ENCODE measurements at regions of chr14 and their contacts with region 1.

Region 1: GRCh38 chr14:87615822-87616679 is 376.9 kb downstream of the GALC start:
- DNase-seq: peak; percentile 77
- H3K4me3 Mint-ChIP-seq: no peak overlapping the region
- H3K27ac Mint-ChIP-seq: no peak overlapping the region
- H3K4me1 Mint-ChIP-seq: peaks cover 13% of the 10 kb centered on the region
- H3K27me3 Mint-ChIP-seq: no peaks in the 10 kb centered on the region
- CTCF ChIP-seq: peak; percentile 77

Region 2: GRCh38 chr14:87066221-87066817 is 549.7 kb before region 1 on chr14:
- CTCF ChIA-PET with region 1: no interaction called
- intact Hi-C with region 1: loop called (anchors 5 kb)
- DNase-seq: no peak
- H3K4me3 Mint-ChIP-seq: no peak overlapping the region
- H3K27ac Mint-ChIP-seq: no peak overlapping the region
- H3K4me1 Mint-ChIP-seq: no peaks in the 10 kb centered on the region
- H3K27me3 Mint-ChIP-seq: no peaks in the 10 kb centered on the region
- CTCF ChIP-seq: peak; percentile 20

Region 3: GRCh38 chr14:87205811-87206210 is 410.2 kb before region 1 on chr14:
- CTCF ChIA-PET with region 1: no interaction called
- intact Hi-C with region 1: loop called (anchors 2 kb)
- DNase-seq: no peak
- H3K4me3 Mint-ChIP-seq: no peak overlapping the region
- H3K27ac Mint-ChIP-seq: no peak overlapping the region
- H3K4me1 Mint-ChIP-seq: no peaks in the 10 kb centered on the region
- H3K27me3 Mint-ChIP-seq: no peaks in the 10 kb centered on the region
- CTCF ChIP-seq: no peak

Region 4: DNA sequence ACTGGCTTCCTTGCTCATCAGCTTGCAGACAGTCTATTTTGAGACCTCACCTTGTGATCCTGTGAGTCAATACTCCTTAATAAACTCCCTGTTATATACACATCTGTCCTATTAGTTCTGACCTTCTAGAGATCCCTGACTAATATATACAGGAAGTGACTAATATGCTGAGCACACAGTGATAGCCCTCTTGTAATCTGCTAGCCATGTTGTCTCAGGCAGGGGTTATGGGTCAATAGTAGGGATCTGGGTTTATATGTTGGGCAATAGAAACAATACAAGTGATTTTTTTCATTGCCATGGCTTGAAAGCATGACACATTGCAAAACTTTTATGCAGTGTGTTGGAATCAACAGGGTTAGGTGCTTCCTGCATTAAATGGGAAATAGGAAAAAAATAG is 185.2 kb before region 1 on chr14:
- CTCF ChIA-PET with region 1: interaction called, 5 read pairs
- intact Hi-C with region 1: loop called (anchors 10 kb)
- DNase-seq: no peak
- H3K4me3 Mint-ChIP-seq: no peak overlapping the region
- H3K27ac Mint-ChIP-seq: no peak overlapping the region
- H3K4me1 Mint-ChIP-seq: peaks cover 17% of the 10 kb centered on the region
- H3K27me3 Mint-ChIP-seq: no peaks in the 10 kb centered on the region
- CTCF ChIP-seq: no peak

Region 5: DNA sequence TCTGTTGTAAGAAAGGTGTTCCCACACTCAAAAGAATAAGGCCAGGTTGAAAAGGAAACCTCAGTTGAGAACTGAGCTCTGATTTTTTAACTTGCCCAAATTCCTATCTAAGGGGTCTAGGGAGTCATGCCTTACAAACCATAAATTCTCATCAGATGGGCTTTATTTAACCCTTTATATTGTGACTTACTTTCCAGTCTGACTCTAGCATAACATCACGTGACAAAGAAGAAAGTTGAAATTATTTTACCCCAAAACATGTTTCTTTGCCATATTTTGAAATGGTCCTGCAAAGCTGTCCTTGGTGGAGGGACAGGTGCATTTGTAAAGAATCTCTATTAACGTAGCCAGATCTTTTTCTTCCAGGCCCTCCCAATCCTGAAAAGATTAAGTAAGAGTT is 34.8 kb before region 1 on chr14:
- CTCF ChIA-PET with region 1: no interaction called
- intact Hi-C with region 1: no loop called
- DNase-seq: no peak
- H3K4me3 Mint-ChIP-seq: no peak overlapping the region
- H3K27ac Mint-ChIP-seq: no peak overlapping the region
- H3K4me1 Mint-ChIP-seq: peaks cover 9% of the 10 kb centered on the region
- H3K27me3 Mint-ChIP-seq: no peaks in the 10 kb centered on the region
- CTCF ChIP-seq: no peak

Region 6: DNA sequence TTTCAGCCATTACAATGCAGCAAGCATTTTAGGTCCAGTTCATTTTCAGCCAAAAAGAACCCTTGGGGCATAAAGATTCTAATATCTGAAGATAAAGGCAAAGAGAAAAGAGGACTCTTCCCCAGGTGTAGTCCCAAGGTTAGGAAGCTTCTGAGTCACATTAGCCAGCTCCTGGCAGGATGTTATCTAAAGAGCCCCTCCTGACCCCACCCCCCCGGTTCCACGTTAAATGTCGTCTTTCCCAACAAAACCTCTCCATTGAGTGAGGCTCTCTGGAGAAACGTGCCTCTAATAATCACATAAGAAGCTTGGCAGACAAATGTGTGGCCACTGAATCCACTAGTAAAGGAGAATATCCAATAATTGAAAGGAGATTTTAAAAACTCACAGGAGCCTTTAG is 109.3 kb after region 1 on chr14:
- CTCF ChIA-PET with region 1: no interaction called
- intact Hi-C with region 1: no loop called
- DNase-seq: no peak
- H3K4me3 Mint-ChIP-seq: no peak overlapping the region
- H3K27ac Mint-ChIP-seq: no peak overlapping the region
- H3K4me1 Mint-ChIP-seq: no peaks in the 10 kb centered on the region
- H3K27me3 Mint-ChIP-seq: no peaks in the 10 kb centered on the region
- CTCF ChIP-seq: no peak

Region 7: GRCh38 chr14:87847216-87847755 is 231.2 kb after region 1 on chr14:
- CTCF ChIA-PET with region 1: no interaction called
- intact Hi-C with region 1: no loop called
- DNase-seq: no peak
- H3K4me3 Mint-ChIP-seq: no peak overlapping the region
- H3K27ac Mint-ChIP-seq: no peak overlapping the region
- H3K4me1 Mint-ChIP-seq: no peaks in the 10 kb centered on the region
- H3K27me3 Mint-ChIP-seq: no peaks in the 10 kb centered on the region
- CTCF ChIP-seq: no peak

Region 8: DNA sequence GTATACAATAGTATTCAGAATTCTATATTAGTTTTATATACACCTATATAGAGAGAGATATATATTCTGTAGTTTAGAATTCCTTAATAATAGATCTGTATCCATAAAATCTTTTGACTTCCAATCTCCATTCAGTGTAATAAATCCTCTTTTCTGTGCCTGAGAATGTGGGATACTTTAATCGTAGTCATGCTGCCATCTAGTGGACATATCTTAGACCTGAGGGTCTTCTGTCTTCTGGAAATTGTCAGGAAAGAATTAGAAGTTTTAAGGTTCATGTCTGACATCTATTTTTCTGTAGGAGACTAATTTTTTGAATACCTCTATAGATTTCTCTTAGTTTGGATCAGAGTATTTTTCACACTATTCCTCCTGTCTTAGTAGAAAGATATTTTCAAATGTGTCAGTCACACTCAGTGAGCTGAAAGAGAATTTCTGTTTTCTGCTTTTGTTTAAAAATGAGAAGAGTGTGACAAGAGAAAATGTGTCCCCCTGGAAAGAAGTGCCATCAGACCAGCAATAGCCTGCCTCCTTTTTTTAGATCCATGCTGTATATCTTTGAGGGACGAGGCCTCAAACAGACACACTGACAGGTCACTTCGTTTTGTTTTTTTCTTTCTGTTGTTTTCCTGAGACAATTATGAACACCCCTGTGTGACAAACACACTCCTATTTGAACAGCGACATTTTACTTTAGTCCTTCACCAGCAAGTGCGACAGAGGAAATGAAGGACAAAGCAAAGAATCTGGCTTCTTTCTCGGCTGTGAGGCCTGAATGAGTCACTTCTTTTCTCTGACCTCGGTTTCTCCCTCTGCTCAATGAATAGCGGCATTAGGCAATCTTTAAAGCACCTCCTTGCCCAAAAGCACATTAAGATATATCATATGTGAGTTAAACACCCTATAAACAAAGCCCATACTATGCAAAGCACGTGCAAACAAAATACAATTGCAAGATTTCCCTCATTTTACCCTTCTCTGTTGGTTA is 280.6 kb after region 1 on chr14:
- CTCF ChIA-PET with region 1: no interaction called
- intact Hi-C with region 1: loop called (anchors 5 kb)
- DNase-seq: peak; percentile 25
- H3K4me3 Mint-ChIP-seq: no peak overlapping the region
- H3K27ac Mint-ChIP-seq: no peak overlapping the region
- H3K4me1 Mint-ChIP-seq: peaks cover 6% of the 10 kb centered on the region
- H3K27me3 Mint-ChIP-seq: no peaks in the 10 kb centered on the region
- CTCF ChIP-seq: no peak